Left cardiac atrium (tissue), 4 donors: ENCODE measurements at regions of chr3 and their contacts with region 1.

Region 1: DNA sequence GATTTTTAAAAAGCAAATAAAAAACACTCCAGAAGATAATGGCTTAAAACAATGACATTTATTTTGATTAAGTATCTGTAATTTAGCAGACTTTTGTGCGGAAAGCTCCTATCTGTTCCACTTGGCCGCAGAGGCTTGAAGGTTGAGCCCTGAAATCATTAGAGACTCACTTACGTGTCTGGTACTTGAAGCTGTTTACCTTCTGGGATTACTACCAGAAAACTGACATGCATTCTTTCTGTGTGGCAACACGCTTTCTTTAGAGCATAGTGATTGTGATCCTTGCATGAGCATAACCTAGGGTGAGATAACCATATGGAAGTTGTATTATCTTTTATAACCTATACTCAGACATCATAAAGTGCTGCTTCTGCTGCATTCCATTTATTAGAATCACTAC is 298.5 kb downstream of the SI start:
- DNase-seq: no peak
- ATAC-seq: no peak

Region 2: GRCh38 chr3:164658125-164658524 is 121.7 kb before region 1 on chr3:
- intact Hi-C with region 1: loop called in 1 of 2 experiments (anchors 10 kb)
- DNase-seq: no peak
- ATAC-seq: no peak